IMR-90 (cell line): ENCODE measurements at regions of chr3 and their contacts with region 1.

Region 1: GRCh38 chr3:98994128-98994762 is 92.8 kb upstream of the DCBLD2 start:
- DNase-seq: peak; percentile 81
- ATAC-seq: peak; percentile 85
- H3K4me3 ChIP-seq: no peak overlapping the region
- H3K27ac ChIP-seq: no peak overlapping the region
- H3K4me1 ChIP-seq: no peaks in the 10 kb centered on the region
- H3K27me3 ChIP-seq: no peaks in the 10 kb centered on the region
- CTCF ChIP-seq: peak; percentile 85
- POLR2A ChIP-seq: 0 out of 2 replicates have a peak, but pooled peaks have one; percentile 24
- RAD21 ChIP-seq: peak; percentile 93

Region 2: DNA sequence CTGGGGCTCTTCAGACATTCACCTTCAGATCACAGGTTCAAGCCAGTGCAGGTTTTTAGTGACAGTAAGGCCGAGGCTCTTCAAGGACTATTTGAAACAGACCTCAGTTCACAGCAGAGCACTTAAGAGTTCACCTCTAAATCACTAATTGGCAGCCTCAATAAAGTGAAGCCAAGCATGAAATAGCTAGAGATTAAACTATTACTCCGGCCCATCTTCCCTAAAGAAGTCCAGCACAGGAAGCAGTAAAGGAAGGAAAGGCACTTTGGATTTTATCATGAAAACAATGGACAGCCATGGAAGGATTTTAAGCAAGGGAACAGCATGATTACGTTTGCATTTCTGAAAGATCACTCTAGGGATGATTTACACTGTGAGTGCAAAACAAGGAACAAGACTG is 1257.3 kb before region 1 on chr3:
- CTCF ChIA-PET with region 1: no interaction called
- POLR2A ChIA-PET with region 1: no interaction called
- dilution Hi-C with region 1: no loop called
- in situ Hi-C with region 1: no loop called
- intact Hi-C with region 1: no loop called
- DNase-seq: no peak
- ATAC-seq: no peak
- H3K4me3 ChIP-seq: no peak overlapping the region
- H3K27ac ChIP-seq: no peak overlapping the region
- H3K4me1 ChIP-seq: no peaks in the 10 kb centered on the region
- H3K27me3 ChIP-seq: no peaks in the 10 kb centered on the region
- CTCF ChIP-seq: no peak
- POLR2A ChIP-seq: no peak
- RAD21 ChIP-seq: no peak

Region 3: GRCh38 chr3:98593046-98593936 is 401.0 kb before region 1 on chr3 and contains the start of gene CPOX:
- CTCF ChIA-PET with region 1: no interaction called
- POLR2A ChIA-PET with region 1: no interaction called
- dilution Hi-C with region 1: no loop called
- in situ Hi-C with region 1: no loop called
- intact Hi-C with region 1: loop called (anchors 1 kb)
- DNase-seq: peak; percentile 88
- ATAC-seq: peak; percentile 98
- H3K4me3 ChIP-seq: peak within 1 kb of the TSS; percentile 81
- H3K27ac ChIP-seq: peak within 1 kb of the TSS; percentile 65
- H3K4me1 ChIP-seq: peaks cover 2% of the 10 kb centered on the region; the same call in 1 of the 2 replicates
- H3K27me3 ChIP-seq: no peaks in the 10 kb centered on the region
- CTCF ChIP-seq: no peak
- POLR2A ChIP-seq: no peak
- RAD21 ChIP-seq: no peak
- total RNA-seq, gene CPOX: 14.5 and 20.3 TPM in 2 replicates

Region 4: DNA sequence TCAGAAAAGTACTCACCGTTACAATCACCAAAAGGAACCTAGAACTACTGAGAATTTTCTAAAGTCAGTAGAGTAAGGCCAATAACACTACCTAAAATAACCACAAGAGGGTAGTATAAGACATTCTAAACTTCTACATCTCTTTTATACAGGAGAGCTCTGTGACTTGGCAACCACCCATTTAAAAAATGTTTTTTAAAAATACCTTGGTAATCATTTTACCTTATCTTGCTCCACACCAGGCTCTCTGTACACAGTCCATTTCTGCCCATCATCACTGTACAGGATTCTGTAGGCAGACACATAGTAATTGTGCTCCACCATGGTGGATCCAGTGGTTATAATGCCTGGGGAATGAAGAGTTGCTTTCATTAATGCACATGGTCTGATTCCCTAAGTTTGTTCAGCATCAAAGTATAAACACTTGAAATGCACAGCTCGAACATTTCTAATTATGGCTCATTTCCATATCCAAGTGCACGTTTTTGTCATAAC is 176.7 kb before region 1 on chr3:
- CTCF ChIA-PET with region 1: interaction called, 45 read pairs
- POLR2A ChIA-PET with region 1: no interaction called
- dilution Hi-C with region 1: no loop called
- in situ Hi-C with region 1: loop called (anchors 5 kb)
- intact Hi-C with region 1: loop called (anchors 1 kb)
- DNase-seq: peak; percentile 59
- ATAC-seq: peak; percentile 65
- H3K4me3 ChIP-seq: no peak overlapping the region
- H3K27ac ChIP-seq: no peak overlapping the region
- H3K4me1 ChIP-seq: peaks cover 4% of the 10 kb centered on the region
- H3K27me3 ChIP-seq: no peaks in the 10 kb centered on the region
- CTCF ChIP-seq: peak; percentile 69
- POLR2A ChIP-seq: no peak
- RAD21 ChIP-seq: peak; percentile 72

Region 5: GRCh38 chr3:98824256-98824655 is 170.0 kb before region 1 on chr3:
- CTCF ChIA-PET with region 1: interaction called, 11 read pairs
- POLR2A ChIA-PET with region 1: no interaction called
- dilution Hi-C with region 1: no loop called
- in situ Hi-C with region 1: loop called (anchors 5 kb)
- intact Hi-C with region 1: no loop called
- DNase-seq: no peak
- ATAC-seq: no peak
- H3K4me3 ChIP-seq: no peak overlapping the region
- H3K27ac ChIP-seq: no peak overlapping the region
- H3K4me1 ChIP-seq: peaks cover 2% of the 10 kb centered on the region; the same call in 1 of the 2 replicates
- H3K27me3 ChIP-seq: no peaks in the 10 kb centered on the region
- CTCF ChIP-seq: 0 out of 2 replicates have a peak, but pooled peaks have one; percentile 13
- POLR2A ChIP-seq: no peak
- RAD21 ChIP-seq: peak; percentile 18; the same call in 1 of the 2 replicates